ENCODE measurements at regions of chr10 and their contacts with region 1.

Region 1: DNA sequence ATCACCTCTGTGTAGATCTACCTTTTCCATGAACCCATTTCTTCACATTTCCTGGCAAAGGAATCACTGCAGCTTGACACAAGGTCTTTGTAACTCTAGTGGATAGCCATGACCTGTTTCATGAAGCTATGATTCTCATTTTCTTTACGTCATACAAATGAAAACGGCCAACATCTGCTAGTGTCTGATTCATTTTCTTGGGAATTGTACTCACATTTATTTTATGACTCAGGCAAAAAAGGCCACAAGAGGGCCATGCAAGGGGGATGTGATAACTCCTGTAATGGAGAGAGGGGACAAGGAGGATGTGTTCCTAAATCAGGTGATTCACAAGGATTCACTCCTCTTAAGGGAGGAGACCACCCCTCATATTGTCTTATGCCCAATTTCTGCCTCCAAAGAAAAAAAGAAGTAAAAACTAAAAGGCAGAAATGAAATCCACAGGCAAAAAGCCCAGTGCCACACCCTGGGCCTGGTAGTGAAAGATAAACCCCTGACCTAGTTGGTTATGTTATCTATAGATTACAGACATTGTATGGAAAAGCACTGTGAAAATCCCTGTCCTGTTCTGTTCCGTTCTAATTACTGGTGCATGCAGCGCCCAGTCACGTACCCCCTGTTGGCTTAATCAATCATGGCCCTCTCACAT is 249.9 kb downstream of the IPMK start:
- DNase-seq: no peak
- ATAC-seq: no peak
- H3K4me3 ChIP-seq: no peak overlapping the region
- H3K27ac ChIP-seq: no peak overlapping the region
- H3K4me1 ChIP-seq: peaks cover 0 to 4% (median 0%) of the 10 kb centered on the region in 12 donors
- H3K27me3 ChIP-seq: peaks cover 0 to 5% (median 0%) of the 10 kb centered on the region in 9 donors
- CTCF ChIP-seq: no peak
- POLR2A ChIP-seq: no peak

Region 2: DNA sequence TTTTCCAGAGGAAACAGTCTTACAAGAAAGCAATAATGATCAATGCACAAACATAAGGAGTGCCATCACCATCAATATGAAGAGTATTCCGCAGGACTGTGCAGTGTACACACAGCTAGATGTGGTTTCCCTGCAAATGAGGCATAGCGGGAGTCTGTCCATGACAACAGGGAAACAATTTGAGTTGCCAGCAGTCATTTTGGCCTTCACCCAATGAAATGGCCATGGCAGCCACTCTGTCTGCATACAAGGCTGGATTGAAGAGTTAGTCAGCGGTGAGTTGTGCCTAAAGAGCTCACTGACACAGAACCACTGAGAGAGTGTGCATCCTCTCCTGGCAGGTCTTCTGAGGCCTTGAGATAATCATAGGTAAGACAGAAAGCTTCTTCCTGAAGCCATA is 53.5 kb before region 1 on chr10:
- intact Hi-C with region 1: loop called in 1 of 10 experiments (anchors 10 kb)
- DNase-seq: peak; percentile 43 to 81 (median 61)
- ATAC-seq: peak; percentile 92 to 97 (median 94)
- H3K4me3 ChIP-seq: no peak overlapping the region
- H3K27ac ChIP-seq: peak overlapping the region in 6 of 12 donors; percentile 42 to 73 (median 57)
- H3K4me1 ChIP-seq: peaks cover 0 to 21% (median 0%) of the 10 kb centered on the region in 12 donors
- H3K27me3 ChIP-seq: no peaks in the 10 kb centered on the region
- CTCF ChIP-seq: no peak
- POLR2A ChIP-seq: peak in 1 of 2 donors; percentile 27